AG04450 (cell line): ENCODE measurements at regions of chr19 and their contacts with region 1.

Region 1: DNA sequence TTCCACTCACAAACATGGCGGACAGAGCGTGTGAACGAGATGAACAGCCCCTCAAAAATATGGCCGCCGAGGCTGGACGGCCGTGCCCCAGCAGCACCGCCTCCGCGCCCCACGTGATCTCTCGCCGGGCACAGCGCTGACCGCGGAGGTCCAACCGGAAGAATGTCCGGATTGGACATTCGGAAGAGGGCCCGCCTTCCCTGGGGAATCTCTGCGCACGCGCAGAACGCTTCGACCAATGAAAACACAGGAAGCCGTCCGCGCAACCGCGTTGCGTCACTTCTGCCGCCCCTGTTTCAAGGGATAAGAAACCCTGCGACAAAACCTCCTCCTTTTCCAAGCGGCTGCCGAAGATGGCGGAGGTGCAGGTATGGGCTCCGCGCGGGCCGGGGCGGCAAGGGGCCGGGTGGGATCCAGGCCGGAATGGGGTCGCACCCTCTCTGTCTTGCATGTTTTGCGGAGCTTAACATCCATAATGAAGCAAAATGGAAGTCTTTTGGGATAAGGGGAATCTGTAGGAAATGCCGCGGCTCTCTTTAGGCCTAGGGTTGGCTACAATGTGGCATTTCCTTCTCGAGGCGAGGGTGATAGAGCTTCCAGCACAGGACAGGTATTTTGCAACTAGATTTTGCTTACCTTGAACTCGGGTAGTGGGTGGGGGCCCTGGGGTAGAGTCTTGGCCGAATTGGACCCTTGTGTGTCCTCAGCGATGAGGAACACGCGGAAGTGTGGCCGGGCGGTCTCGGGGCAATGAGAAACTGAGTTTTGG is at the start of gene RPL13A:
- DNase-seq: peak; percentile 99
- H3K4me3 ChIP-seq: peak within 1 kb of the TSS; percentile 96
- H3K27ac ChIP-seq: peak within 1 kb of the TSS; percentile 82
- H3K27me3 ChIP-seq: no peaks in the 10 kb centered on the region
- CTCF ChIP-seq: no peak
- polyA plus RNA-seq, gene RPL13A: 3,816 and 4,938 TPM in 2 replicates

Region 2: DNA sequence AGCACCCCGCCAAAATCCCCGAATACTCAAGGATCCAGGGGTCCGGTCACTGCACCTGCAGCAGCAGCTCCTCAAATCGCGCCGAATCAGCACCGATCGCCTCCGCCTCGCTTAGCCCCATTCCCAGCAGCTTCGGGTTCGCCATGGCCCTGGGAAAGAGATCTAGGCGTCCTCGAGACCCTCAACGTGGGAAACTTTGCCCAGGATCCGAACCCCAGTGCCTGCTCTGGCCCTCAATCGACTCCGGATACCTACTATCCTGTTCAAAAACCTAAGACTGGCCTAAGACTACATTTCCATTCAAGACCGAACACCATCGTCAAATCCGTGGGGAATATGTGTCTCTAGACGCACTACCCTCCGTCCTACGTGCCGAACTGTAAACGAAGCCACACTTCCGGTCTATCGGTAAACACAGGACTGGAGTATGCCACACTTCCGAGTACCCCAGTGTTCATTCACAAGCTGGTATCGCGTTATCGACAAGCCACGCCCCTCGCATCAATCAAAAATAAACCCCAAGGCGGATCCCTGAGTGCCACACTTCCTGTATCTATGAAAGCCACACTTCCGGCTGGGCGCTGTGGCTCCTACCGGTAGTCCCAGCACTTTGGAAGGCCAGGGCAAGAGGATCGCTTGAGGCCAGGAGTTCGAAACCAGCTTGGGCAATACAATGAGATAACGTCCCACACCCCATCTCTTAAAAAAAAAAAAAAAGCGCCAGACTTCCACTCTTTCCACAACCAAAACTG is 35.9 kb before region 1 on chr19 and contains the start of gene PIH1D1:
- CTCF ChIA-PET with region 1: no interaction called
- POLR2A ChIA-PET with region 1: interaction called, 17 read pairs
- DNase-seq: peak; percentile 97
- H3K4me3 ChIP-seq: peak within 1 kb of the TSS; percentile 93
- H3K27ac ChIP-seq: peak within 1 kb of the TSS; percentile 97
- H3K27me3 ChIP-seq: no peaks in the 10 kb centered on the region
- CTCF ChIP-seq: peak; percentile 34; the same call in 1 of the 2 replicates
- polyA plus RNA-seq, gene PIH1D1: 60.3 and 62.5 TPM in 2 replicates

Region 3: GRCh38 chr19:49473868-49474544 is 13.5 kb before region 1 on chr19 and contains the start of gene FLT3LG:
- CTCF ChIA-PET with region 1: interaction called, 5 read pairs
- POLR2A ChIA-PET with region 1: interaction called, 11 read pairs
- DNase-seq: no peak
- H3K4me3 ChIP-seq: peak within 1 kb of the TSS; percentile 72
- H3K27ac ChIP-seq: peak within 1 kb of the TSS; percentile 11
- H3K27me3 ChIP-seq: no peaks in the 10 kb centered on the region
- CTCF ChIP-seq: peak; percentile 96
- polyA plus RNA-seq, gene FLT3LG: 3.7 and 5.9 TPM in 2 replicates

Region 4: DNA sequence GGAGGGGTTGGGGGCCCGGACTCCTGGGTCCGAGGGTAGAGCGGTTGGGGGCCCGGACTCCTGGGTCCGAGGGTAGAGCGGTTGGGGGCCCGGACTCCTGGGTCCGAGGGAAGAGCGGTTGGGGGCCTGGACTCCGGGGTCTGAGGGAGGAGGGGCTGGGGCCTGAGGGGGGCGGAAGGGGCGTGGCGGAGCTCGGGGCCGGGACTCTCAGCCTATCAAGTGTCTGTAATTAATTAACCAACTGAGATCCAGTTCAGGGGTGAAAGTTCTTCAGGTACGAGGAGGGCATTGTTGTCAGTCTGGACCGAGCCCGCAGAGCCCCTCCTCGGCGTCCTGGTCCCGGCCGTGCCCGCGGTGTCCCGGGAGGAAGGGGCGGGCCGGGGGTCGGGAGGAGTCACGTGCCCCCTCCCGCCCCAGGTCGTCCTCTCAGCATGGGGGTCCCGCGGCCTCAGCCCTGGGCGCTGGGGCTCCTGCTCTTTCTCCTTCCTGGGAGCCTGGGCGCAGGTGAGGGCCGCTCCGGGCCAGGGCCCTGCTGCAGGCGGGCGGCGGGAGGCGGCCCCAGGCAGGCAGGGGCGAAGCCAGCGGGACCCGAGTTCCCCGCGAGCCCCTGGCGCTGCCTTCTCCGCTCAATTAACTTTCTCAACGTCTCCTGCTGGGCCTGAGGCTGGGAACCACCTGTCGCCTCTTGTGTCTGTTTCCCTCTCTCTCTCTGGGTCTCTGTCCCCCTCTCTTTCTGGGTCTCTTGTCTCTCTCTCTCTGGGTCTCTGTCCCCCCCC is 25.7 kb after region 1 on chr19:
- CTCF ChIA-PET with region 1: no interaction called
- POLR2A ChIA-PET with region 1: no interaction called
- DNase-seq: no peak
- H3K4me3 ChIP-seq: peak overlapping the region; percentile 63
- H3K27ac ChIP-seq: no peak overlapping the region
- H3K27me3 ChIP-seq: no peaks in the 10 kb centered on the region
- CTCF ChIP-seq: no peak